AG04449 (cell line): ENCODE measurements at regions of chr22 and their contacts with region 1.

Region 1: GRCh38 chr22:20418211-20418788 is 19.3 kb downstream of the SCARF2 start:
- DNase-seq: no peak
- H3K4me3 ChIP-seq: peak overlapping the region; percentile 56
- CTCF ChIP-seq: peak; percentile 74

Region 2: GRCh38 chr22:20405931-20406685 is 12.2 kb before region 1 on chr22:
- CTCF ChIA-PET with region 1: interaction called, 38 read pairs
- POLR2A ChIA-PET with region 1: no interaction called
- DNase-seq: no peak
- H3K4me3 ChIP-seq: no peak overlapping the region
- CTCF ChIP-seq: no peak

Region 3: DNA sequence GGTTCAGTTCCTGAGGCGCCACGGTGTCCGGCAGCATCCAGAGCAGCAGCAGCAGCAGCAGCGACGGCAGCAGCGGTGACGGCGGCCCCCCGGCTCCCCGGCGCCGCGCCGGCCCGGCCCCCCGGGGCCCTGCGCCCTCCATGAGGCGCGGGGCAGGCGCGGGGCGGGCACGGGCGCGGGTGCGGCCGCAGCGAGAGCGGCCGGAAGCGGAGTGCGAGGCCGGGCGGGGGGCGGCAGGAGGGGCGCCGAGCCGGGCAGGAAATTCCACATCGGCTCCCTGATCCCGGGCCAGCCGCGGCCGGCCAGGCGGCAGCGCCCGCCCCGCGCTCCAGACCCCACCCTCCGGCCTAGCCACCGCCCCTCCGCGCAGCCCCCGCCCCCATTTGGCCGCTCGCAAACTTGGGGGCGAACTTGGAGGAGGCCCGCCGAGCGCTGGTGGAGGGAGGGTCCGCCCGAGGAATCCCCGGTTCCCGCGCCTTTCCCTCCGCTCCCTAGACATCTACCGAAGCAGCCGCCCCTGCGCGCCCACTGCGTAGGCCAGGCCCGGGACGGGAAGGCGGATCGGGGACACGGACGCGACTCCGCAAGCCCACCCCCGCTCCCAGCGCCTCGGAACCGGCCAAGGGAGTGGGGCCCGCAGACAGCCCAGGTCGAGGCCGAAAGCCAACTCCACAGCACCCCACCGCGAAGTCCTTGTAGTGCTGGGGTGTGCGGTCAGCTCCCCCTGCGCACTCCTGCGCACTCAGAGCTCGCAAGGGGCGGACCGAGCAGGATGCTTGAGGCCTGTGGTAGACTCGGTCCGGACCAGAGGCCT is 19.5 kb after region 1 on chr22 and contains the start of gene SCARF2:
- CTCF ChIA-PET with region 1: interaction called, 34 read pairs
- POLR2A ChIA-PET with region 1: interaction called, 5 read pairs
- DNase-seq: no peak
- H3K4me3 ChIP-seq: peak within 1 kb of the TSS; percentile 98
- CTCF ChIP-seq: no peak

Region 4: DNA sequence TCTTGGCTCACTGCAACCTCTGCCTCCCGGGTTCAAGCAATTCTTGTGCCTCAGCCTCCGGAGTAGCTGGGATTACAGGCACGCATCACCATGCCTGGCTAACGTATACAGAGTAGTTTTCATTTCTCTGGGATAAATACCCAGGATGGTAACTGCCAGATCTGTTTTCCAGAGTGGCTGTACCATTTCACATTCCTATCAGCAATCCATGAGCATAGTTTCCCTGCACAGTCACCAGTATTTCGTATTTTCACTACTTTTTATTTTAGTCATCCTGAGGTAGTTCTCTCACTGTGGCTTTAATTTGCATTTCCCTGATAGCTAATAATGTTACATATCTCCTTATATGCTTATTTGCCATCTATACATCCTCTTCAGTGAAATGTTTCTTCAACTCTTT is 30.3 kb after region 1 on chr22:
- CTCF ChIA-PET with region 1: interaction called, 152 read pairs
- POLR2A ChIA-PET with region 1: interaction called, 4 read pairs
- DNase-seq: no peak
- H3K4me3 ChIP-seq: no peak overlapping the region
- CTCF ChIP-seq: no peak

Region 5: DNA sequence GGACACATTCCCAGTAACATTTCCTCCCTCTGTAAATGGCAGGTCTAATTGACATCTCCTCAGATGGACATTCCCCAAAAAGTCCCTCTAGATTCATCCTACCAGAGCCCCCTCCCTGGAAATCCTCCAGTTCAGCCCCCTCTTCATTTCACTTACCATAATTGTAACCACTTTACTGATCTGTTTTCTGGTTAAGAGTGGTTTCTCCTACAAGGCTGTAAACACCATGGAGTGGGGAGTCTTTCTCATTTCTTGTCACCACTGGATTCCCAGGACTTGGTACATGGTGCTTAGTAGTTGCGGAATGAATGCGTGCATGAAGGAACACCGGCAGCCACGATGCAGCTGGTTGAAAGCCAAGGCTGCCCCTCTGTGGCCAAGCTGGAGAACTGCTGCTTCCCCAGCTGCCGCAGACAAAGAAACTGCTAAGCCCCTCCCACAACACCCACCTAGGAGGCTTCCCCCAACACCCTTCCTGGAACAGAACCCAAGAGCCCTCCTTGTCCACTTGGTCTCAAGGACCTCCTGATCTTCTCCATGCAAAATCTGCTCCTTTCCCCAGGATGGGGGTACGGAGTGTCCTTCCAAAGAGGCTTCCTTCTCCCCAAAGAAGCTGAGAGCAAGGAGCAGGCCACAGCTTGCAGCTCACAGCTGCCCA is 37.9 kb after region 1 on chr22:
- CTCF ChIA-PET with region 1: interaction called, 152 read pairs
- POLR2A ChIA-PET with region 1: interaction called, 7 read pairs
- DNase-seq: peak; percentile 26
- H3K4me3 ChIP-seq: no peak overlapping the region
- CTCF ChIP-seq: peak; percentile 88

Region 6: GRCh38 chr22:20463324-20464095 is 45.2 kb after region 1 on chr22:
- CTCF ChIA-PET with region 1: interaction called, 50 read pairs
- POLR2A ChIA-PET with region 1: no interaction called
- DNase-seq: no peak
- H3K4me3 ChIP-seq: no peak overlapping the region
- CTCF ChIP-seq: no peak

Region 7: DNA sequence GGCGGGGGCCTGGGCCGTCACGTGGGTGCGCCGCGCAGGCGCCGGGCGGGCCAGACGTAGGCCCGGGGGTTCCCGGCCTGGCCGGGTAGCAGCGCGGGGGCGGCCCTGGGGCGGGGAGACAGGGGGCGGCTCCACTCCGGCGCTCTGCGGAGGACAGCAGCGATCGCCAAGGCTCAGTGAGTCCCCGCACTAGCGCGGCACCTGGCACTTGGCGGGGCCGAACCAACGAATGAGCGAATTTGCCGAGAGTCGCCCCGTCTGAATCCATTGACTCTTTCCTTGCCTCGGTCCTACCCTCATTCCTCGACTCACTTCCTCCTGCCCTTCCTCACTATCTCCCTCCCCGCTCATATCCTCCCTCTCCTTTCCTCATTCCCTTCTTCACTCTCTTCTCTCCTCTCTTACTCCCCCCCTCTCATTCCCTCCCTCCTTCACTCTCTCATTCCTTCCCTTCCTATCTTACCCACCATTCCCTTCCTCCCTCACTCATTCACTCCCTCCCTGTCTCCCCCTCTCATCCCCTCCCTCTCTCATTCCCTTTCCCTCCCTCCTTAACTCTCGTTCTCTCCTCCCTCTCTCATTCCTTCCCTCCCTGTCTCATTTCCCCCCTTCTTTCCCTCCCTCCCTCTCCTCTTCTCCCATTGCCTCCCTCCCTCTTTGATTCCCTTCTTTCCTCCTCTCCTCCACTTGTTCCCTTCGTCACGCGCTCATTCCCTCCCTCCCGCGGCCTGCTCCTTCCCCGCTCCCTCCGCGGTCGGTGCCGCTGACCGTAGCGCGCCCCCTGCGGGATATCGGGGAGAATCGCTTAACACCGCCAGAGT is 77.8 kb after region 1 on chr22:
- CTCF ChIA-PET with region 1: interaction called, 13 read pairs
- POLR2A ChIA-PET with region 1: no interaction called
- DNase-seq: peak; percentile 23
- H3K4me3 ChIP-seq: peak overlapping the region; percentile 75
- CTCF ChIP-seq: peak; percentile 98